Activated CD4-positive, alpha-beta memory T cell treated with anti-CD3 and anti-CD28 coated beads for 36 hours (primary cell): ENCODE measurements at regions of chr1 and their contacts with region 1.

Region 1: DNA sequence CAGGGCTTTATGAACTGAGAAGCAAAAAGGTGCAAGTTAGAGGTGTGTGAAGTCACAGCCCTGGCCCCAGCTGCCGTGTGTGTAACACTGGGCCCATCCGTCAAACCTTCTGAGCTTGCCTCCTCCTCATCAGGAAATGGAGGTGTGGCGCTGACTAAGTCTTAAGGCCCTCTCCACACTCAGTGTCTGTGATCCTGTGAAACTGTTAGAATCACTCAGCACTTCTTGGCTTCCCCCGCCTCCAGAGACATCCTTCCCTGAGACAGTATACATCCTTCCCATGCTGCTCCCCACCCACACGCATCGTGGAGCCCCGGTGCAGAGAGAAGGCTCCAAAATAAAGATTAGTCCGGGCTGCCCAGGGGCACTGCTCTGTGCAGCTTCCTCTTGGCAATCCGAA is 33.3 kb downstream of the LRP8 start:
- DNase-seq: peak; percentile 84
- H3K4me3 Mint-ChIP-seq: no peak overlapping the region
- H3K27ac Mint-ChIP-seq: peak overlapping the region; percentile 67
- H3K4me1 Mint-ChIP-seq: peaks cover 42% of the 10 kb centered on the region
- H3K27me3 Mint-ChIP-seq: no peaks in the 10 kb centered on the region

Region 2: DNA sequence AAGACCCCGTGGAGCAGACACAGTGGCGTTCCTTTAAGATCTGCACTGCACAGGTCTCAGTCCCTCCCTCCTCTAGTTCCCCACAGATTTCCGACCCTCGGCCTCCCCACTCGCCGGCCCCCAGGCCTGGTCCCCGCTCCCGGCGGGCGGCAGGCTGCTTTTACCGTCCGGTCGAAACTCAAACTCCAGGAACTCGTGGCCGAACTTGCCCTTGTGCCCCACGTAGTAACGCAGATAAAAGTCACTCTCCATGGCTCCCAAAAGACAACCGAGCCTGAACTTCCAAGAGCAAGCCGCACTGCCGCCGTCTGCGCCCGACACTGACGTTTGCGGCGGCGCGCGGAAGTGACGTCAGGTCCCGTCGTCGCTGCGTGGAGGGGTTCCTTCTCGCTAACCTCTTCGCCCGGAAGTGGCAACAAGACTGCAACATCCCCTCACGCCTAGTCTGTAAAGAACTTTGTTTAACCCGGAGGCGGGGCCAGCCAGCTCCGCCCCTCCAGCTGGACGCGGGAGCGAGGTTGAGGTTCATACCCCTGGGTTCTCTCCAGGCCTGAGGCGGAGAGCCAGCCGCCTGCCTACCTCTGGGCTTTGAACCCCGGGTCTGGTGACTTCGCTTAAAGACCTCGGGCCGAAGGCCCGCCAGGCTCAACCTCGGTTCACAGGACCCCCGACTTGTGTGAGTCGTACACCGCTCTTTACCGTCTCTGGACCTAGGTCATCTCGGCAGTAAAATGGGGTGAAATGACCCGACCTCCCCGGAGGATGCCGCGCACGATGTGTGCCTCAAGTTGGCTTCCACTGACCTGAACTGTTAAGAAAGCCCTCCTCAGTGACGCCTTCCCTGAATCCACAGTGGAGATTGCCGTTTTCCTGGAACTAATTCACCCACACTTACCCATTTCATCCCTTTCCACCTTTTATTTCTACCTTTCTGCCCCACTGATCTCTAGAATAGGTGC is 56.1 kb before region 1 on chr1 and contains the start of gene MAGOH:
- CTCF ChIA-PET with region 1: no interaction called
- POLR2A ChIA-PET with region 1: no interaction called
- intact Hi-C with region 1: loop called (anchors 2 kb)
- DNase-seq: peak; percentile 97
- H3K4me3 Mint-ChIP-seq: peak within 1 kb of the TSS; percentile 97
- H3K27ac Mint-ChIP-seq: peak within 1 kb of the TSS; percentile 85
- H3K4me1 Mint-ChIP-seq: peaks cover 26% of the 10 kb centered on the region
- H3K27me3 Mint-ChIP-seq: no peaks in the 10 kb centered on the region
- total RNA-seq, gene MAGOH: 85.7 to 89.5 TPM

Region 3: DNA sequence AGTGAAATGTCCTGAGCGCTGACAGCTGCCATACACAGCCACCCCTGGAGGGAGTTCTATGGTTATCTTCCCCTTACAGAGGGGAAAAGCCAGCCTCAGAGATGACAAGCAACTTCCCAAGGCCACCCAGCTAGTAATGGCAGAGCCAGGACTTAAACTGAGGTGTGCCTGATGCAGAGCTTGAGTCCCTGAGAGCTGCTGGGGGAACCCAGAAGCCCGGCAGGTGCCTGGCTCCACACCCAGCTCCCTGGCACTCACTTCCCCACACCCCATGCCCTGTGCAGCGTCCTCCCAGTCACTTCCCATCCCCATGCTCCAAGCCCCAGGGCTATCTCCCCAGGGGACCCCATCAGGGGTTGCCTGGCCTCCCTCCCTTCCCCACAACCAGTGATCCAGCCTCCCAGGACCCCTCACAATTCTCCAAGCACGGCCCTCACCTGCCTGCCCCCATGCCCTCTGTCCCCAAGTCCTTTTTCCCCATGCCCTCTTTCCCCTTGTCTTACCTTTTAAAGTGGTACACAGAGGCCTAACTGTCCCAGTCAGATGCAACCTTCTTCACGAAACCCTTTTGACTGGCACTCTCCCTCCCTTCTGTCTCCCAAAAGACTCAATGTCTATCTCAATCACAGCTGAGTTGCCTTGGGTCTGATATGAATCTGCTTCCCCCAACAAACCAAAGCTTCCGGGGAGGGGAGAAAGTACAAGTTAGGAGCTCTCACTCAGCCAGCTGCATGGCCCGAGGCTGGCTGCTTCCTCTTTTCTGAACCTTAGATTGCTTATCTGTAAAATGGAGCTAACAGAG is 73.1 kb after region 1 on chr1:
- CTCF ChIA-PET with region 1: no interaction called
- POLR2A ChIA-PET with region 1: no interaction called
- intact Hi-C with region 1: loop called (anchors 2 kb)
- DNase-seq: peak; percentile 63
- H3K4me3 Mint-ChIP-seq: peak overlapping the region; percentile 61
- H3K27ac Mint-ChIP-seq: peak overlapping the region; percentile 77
- H3K4me1 Mint-ChIP-seq: peaks cover 18% of the 10 kb centered on the region
- H3K27me3 Mint-ChIP-seq: no peaks in the 10 kb centered on the region

Region 4: DNA sequence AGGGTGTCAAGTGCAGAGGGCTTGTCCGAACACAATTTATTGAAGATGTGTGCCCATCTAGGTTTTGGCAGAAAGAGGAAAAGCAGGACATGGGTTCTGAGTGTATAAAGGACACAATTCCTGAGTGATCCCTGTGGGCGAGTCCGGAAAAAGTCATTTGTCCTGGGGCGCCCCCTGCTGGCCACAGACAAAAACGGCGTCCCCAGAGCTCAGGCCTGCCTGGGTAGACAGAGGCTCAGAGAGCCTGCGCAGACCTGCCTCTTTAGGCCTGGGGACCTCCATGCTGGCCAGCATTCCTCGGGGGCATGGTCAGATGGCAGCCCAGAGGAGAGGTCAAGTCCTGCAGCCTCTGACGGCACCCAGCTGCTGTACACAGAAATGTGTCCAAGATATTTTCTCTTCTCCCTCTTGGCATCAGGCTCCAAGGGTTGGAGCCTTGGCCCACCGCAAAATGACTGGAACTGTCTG is 98.8 kb after region 1 on chr1:
- CTCF ChIA-PET with region 1: interaction called, 6 read pairs
- POLR2A ChIA-PET with region 1: no interaction called
- intact Hi-C with region 1: loop called (anchors 5 kb)
- DNase-seq: peak; percentile 80
- H3K4me3 Mint-ChIP-seq: no peak overlapping the region
- H3K27ac Mint-ChIP-seq: no peak overlapping the region
- H3K4me1 Mint-ChIP-seq: peaks cover 2% of the 10 kb centered on the region
- H3K27me3 Mint-ChIP-seq: no peaks in the 10 kb centered on the region

Region 5: GRCh38 chr1:53477651-53478501 is 183.3 kb after region 1 on chr1:
- CTCF ChIA-PET with region 1: no interaction called
- POLR2A ChIA-PET with region 1: no interaction called
- intact Hi-C with region 1: no loop called
- DNase-seq: no peak
- H3K4me3 Mint-ChIP-seq: no peak overlapping the region
- H3K27ac Mint-ChIP-seq: no peak overlapping the region
- H3K4me1 Mint-ChIP-seq: no peaks in the 10 kb centered on the region
- H3K27me3 Mint-ChIP-seq: no peaks in the 10 kb centered on the region